Activated naive CD4-positive, alpha-beta T cell treated with anti-CD3 and anti-CD28 coated beads, Interleukin-2, amount 10 ng/mL, durations not matched to agents 7 days and 5 days (primary cell): ENCODE measurements at regions of chr12 and their contacts with region 1.

Region 1: GRCh38 chr12:47742253-47742825 is 16.3 kb downstream of the RAPGEF3 start:
- DNase-seq: peak; percentile 86
- H3K4me3 Mint-ChIP-seq: no peak overlapping the region
- H3K27ac Mint-ChIP-seq: no peak overlapping the region
- H3K4me1 Mint-ChIP-seq: peaks cover 8% of the 10 kb centered on the region
- H3K27me3 Mint-ChIP-seq: peaks cover 64% of the 10 kb centered on the region

Region 2: GRCh38 chr12:47616440-47616839 is 125.9 kb before region 1 on chr12:
- CTCF ChIA-PET with region 1: no interaction called
- DNase-seq: no peak
- H3K4me3 Mint-ChIP-seq: no peak overlapping the region
- H3K27ac Mint-ChIP-seq: no peak overlapping the region
- H3K4me1 Mint-ChIP-seq: no peaks in the 10 kb centered on the region
- H3K27me3 Mint-ChIP-seq: no peaks in the 10 kb centered on the region

Region 3: DNA sequence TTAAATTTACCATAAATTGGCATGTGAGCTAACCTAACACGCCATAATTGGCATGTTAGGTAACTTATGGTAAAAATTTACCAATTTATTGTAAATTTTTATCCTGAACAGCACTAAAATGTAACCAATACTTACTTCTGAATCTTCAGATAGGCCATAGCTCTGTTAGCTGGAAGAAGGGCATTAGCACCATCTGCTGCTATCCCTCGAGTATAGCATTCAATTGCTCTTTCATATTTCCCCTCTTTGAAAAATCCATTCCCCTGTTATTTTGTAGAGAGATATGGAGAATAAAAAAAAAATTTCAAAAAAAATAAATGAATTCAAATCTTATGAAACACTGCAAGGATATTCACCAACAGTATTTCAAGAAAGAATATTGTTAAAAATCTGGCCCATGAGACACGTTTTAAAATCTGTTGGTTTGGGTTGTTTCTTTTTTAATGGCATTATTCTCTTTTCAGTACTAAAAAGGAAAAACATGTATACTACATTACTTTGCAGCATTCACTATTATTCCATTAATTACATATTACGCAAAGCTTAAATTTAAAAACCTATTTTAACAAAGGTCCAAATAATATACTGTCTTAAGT is 55.6 kb before region 1 on chr12:
- CTCF ChIA-PET with region 1: no interaction called
- DNase-seq: peak; percentile 38
- H3K4me3 Mint-ChIP-seq: no peak overlapping the region
- H3K27ac Mint-ChIP-seq: no peak overlapping the region
- H3K4me1 Mint-ChIP-seq: peaks cover 7% of the 10 kb centered on the region
- H3K27me3 Mint-ChIP-seq: no peaks in the 10 kb centered on the region

Region 4: GRCh38 chr12:47715393-47715876 is 26.9 kb before region 1 on chr12:
- CTCF ChIA-PET with region 1: interaction called, 107 read pairs
- DNase-seq: peak; percentile 88
- H3K4me3 Mint-ChIP-seq: no peak overlapping the region
- H3K27ac Mint-ChIP-seq: no peak overlapping the region
- H3K4me1 Mint-ChIP-seq: peaks cover 26% of the 10 kb centered on the region
- H3K27me3 Mint-ChIP-seq: peaks cover 12% of the 10 kb centered on the region

Region 5: GRCh38 chr12:47758834-47759690 is 16.7 kb after region 1 on chr12 and contains the start of gene RAPGEF3:
- CTCF ChIA-PET with region 1: interaction called, 207 read pairs
- DNase-seq: peak; percentile 82
- H3K4me3 Mint-ChIP-seq: peak within 1 kb of the TSS; percentile 69
- H3K27ac Mint-ChIP-seq: no peak within 1 kb of the TSS
- H3K4me1 Mint-ChIP-seq: peaks cover 22% of the 10 kb centered on the region
- H3K27me3 Mint-ChIP-seq: peaks cover 74% of the 10 kb centered on the region

Region 6: GRCh38 chr12:47779301-47779942 is 37.1 kb after region 1 on chr12:
- CTCF ChIA-PET with region 1: interaction called, 597 read pairs
- DNase-seq: peak; percentile 95
- H3K4me3 Mint-ChIP-seq: no peak overlapping the region
- H3K27ac Mint-ChIP-seq: peak overlapping the region; percentile 77
- H3K4me1 Mint-ChIP-seq: peaks cover 53% of the 10 kb centered on the region
- H3K27me3 Mint-ChIP-seq: no peaks in the 10 kb centered on the region

Region 7: DNA sequence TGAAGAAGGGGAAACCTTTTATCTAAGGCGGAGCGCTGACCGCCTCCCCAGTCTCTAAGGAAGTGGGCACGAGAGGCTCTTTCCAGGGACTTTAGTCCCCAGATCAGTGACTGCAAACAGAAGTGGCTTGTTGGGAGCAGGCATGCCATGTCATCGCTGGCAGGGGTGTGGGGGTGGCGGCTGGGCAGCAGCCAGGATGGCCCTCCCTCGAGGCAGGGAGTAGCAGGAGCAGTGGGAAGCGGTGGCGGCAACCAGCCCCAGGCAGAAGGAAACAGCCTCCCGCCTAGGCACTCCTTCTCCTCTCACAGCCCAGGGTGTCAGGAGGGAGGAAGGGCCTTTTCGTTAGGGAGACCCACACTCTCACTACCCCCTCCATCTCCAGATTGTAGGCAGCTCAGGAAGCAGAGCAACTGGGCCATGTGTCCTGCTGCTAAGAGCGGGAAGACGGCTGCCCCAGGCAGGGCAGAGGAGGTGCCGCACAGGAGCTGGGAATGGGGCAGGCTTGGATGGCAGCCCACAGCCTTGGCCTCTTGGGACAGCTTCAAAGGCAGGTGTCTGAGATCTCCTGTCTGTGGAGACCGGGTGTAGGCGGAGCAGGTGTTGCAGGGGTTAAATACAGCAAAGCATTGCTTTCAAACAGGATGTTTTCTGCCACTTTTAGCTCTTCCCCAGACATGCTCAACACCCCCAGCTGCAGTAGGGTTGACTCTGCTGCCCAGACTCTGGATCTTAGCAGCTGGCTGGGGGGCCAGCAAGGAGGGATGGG is 140.6 kb after region 1 on chr12:
- CTCF ChIA-PET with region 1: interaction called, 16 read pairs
- DNase-seq: peak; percentile 67
- H3K4me3 Mint-ChIP-seq: peak overlapping the region; percentile 79
- H3K27ac Mint-ChIP-seq: peak overlapping the region; percentile 96
- H3K4me1 Mint-ChIP-seq: peaks cover 70% of the 10 kb centered on the region
- H3K27me3 Mint-ChIP-seq: no peaks in the 10 kb centered on the region

Region 8: DNA sequence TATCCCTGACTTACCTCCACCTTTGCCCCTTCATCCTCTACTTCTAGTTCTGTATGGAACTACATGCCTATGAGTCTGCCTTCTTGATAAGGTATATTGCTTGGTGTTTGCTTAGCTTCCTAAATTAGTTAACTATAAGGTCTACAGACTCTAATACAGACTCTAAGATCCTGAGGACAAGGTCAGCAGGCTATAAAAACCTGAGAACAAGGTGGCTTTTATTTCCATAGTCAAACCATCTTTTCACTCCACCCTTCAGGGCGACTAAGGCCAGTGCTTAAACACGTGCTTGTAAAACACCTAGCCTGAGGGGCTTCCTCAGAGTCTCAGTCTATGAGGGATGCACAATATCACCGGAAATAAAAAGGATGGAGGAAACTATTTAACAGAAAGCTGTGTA is 298.0 kb after region 1 on chr12:
- CTCF ChIA-PET with region 1: no interaction called
- DNase-seq: no peak
- H3K4me3 Mint-ChIP-seq: no peak overlapping the region
- H3K27ac Mint-ChIP-seq: no peak overlapping the region
- H3K4me1 Mint-ChIP-seq: peaks cover 3% of the 10 kb centered on the region
- H3K27me3 Mint-ChIP-seq: peaks cover 8% of the 10 kb centered on the region